Common myeloid progenitor, CD34-positive (primary cell): ENCODE measurements at regions of chr10 and their contacts with region 1.

Region 1: GRCh38 chr10:114703377-114704107 is 45.5 kb upstream of the ABLIM1 start:
- DNase-seq: peak; percentile 61 to 83 (median 81)
- H3K4me3 ChIP-seq: no peak overlapping the region
- H3K27ac ChIP-seq: no peak overlapping the region
- H3K4me1 ChIP-seq: peaks cover 0 to 5% (median under 1%) of the 10 kb centered on the region in 4 experiments
- H3K27me3 ChIP-seq: no peaks in the 10 kb centered on the region

Region 2: DNA sequence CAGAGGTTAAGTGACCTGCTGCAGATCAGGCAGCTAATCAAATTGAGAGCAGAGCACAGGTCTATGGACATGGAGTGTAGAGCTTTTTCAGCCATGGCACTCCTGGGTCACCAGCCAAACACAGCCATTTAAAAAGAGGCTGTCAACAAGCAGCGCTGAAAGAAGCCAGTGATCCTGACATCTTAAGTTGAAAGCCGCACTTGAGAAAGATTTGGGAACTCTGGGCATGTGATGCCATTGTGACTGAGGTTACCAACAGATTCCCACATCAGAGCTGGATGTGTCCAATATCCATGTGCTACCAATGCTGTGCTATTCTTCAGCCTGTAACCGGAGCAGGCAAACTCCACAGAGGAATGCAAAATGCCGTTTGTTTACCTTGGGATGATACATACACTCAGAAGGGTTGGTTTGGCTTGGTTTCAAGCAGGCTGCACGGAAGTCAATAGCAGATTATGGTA is 10.8 kb after region 1 on chr10:
- CTCF ChIA-PET with region 1: interaction called, 26 read pairs
- POLR2A ChIA-PET with region 1: no interaction called
- DNase-seq: peak in 2 of 3 donors; percentile 36 to 52
- H3K4me3 ChIP-seq: no peak overlapping the region
- H3K27ac ChIP-seq: no peak overlapping the region
- H3K4me1 ChIP-seq: peaks cover 0 to 40% (median 17%) of the 10 kb centered on the region in 4 experiments
- H3K27me3 ChIP-seq: no peaks in the 10 kb centered on the region

Region 3: GRCh38 chr10:114779803-114780609 is 76.5 kb after region 1 on chr10:
- CTCF ChIA-PET with region 1: interaction called, 12 read pairs
- POLR2A ChIA-PET with region 1: no interaction called
- DNase-seq: peak in 2 of 3 donors; percentile 43 to 58
- H3K4me3 ChIP-seq: no peak overlapping the region
- H3K27ac ChIP-seq: no peak overlapping the region
- H3K4me1 ChIP-seq: peaks cover 2 to 12% (median 11%) of the 10 kb centered on the region in 4 experiments
- H3K27me3 ChIP-seq: no peaks in the 10 kb centered on the region